ENCODE measurements at regions of chr10 and their contacts with region 1.

Region 1: DNA sequence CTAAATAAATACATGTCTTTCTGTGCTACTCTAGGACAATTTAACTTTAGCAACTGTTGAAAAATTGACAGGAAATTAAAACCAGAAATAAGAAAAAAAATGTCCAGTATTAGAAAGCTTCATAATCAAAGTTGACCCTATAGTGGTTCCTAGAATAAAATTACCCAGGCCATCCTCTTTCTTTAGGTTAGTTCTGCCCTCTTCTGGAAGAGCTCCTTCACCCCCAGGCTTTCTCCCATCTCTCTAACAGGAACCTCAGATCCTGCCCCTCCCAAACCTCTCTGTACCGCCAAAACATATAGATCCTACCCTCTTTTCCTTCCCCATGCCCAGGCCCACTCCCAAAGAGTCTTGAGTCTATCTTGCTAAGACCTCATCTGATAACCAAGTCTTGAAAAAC is 159.4 kb upstream of the CDK1 start:
- DNase-seq: no peak
- H3K4me3 Mint-ChIP-seq: no peak overlapping the region
- H3K27ac Mint-ChIP-seq: no peak overlapping the region
- H3K4me1 Mint-ChIP-seq: peaks cover 6% of the 10 kb centered on the region
- H3K27me3 Mint-ChIP-seq: no peaks in the 10 kb centered on the region

Region 2: DNA sequence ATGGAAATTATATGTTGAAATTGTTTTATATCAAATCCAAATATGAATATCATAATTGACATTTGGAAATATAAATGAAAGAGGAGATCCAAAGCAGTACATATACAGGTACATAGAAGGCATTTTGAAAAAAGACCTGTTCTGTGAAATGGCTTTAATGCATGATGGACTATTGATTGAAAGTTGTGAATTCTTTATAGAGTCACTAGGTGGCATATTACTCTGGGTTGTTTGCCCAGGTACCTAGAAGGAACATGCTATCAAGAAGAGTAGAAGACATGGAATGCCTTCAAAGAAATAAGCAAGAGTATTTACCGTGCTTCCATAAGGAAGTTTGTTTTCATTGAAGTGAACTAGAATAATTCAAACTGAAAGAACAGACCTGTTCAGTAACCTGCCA is 69.2 kb before region 1 on chr10:
- CTCF ChIA-PET with region 1: no interaction called
- intact Hi-C with region 1: loop called (anchors 1 kb)
- DNase-seq: no peak
- H3K4me3 Mint-ChIP-seq: no peak overlapping the region
- H3K27ac Mint-ChIP-seq: no peak overlapping the region
- H3K4me1 Mint-ChIP-seq: peaks cover 1% of the 10 kb centered on the region
- H3K27me3 Mint-ChIP-seq: no peaks in the 10 kb centered on the region

Region 3: GRCh38 chr10:61140765-61141392 is 522.0 kb after region 1 on chr10:
- CTCF ChIA-PET with region 1: no interaction called
- intact Hi-C with region 1: no loop called
- DNase-seq: no peak
- H3K4me3 Mint-ChIP-seq: no peak overlapping the region
- H3K27ac Mint-ChIP-seq: no peak overlapping the region
- H3K4me1 Mint-ChIP-seq: no peaks in the 10 kb centered on the region
- H3K27me3 Mint-ChIP-seq: peaks cover 3% of the 10 kb centered on the region